Heart left ventricle (tissue), 16 donors: ENCODE measurements at regions of chr2 and their contacts with region 1.

Region 1: DNA sequence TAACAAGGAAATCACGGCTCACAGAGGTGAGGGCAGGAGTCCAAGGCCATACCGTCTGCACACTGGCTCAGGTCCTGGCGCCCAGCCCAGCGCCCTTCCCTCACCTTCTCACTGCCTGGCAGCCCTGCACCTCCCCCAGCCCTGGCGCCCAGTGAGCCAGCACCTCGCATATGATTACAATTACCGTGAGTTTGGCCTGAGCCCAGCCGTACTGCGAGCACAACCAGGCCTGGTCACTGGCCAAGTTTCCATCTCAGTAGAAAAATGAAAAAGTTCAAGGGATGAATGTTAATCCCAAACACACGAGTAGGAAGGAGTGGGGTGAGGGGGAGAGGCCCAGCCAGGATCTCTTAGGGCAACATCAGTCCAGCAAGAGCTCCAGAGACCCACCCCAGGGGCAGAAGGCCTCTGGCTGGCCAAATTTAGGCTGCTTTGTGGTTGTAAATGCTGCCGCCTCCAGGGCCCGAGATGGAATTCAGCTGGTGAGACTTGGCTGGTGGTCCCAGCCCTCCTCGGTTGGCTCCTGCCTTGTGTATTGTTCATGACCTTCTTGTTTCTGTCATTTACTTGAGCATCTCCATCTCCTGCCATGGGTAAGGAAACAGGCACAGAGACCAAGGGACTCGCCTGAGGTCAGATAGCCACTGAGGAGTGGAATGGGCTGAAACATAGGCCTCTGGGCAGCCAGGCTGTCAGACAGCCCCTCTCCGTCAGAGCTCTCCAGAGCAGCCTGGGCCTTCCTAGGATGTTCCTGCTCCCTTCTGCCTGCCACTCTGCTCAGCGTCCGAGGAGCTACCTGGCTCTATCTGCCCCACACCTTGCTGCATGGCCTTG is 68.2 kb downstream of the MCFD2 start:
- DNase-seq: peak; percentile 93 to 98 (median 95)
- ATAC-seq: peak; percentile 79 to 91 (median 90)
- H3K4me3 ChIP-seq: no peak overlapping the region
- H3K27ac ChIP-seq: peak overlapping the region; percentile 80 to 98 (median 92)
- H3K4me1 ChIP-seq: peaks cover 32 to 63% (median 58%) of the 10 kb centered on the region in 12 donors
- H3K27me3 ChIP-seq: no peaks in the 10 kb centered on the region
- CTCF ChIP-seq: peak in 3 of 12 donors; percentile 17 to 26 (median 18)
- POLR2A ChIP-seq: no peak

Region 2: DNA sequence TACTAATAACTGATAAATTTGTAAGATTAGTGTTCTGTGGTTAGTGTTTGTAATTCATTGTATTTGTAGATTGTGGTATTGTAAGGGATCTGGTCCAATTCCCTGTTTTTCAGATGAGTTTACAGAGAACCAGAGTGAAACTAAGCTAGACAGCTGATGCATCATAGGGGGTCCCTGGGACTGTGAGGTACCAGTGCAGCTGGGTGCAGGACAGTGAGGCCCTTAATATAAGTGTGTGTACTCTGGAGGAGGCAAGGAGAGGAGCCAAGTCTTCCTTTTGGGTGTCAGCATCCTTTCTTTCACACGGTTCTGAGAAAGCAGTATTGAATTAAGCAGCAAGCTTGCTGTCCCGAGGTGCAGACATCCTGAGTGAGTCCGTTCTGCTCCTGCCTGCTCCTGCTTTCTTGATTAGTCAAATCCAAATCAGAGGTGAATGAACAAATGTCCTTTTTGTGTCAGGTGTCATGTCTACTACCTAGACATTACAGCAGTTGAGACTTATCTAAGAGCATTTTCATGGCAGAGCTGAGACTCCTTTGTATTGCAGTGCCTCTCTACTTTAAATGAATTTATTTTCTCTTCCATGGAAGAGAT is 126.8 kb before region 1 on chr2:
- intact Hi-C with region 1: no loop called
- DNase-seq: no peak
- ATAC-seq: peak; percentile 28 to 57 (median 40)
- H3K4me3 ChIP-seq: no peak overlapping the region
- H3K27ac ChIP-seq: peak overlapping the region in 1 of 12 donors; percentile 29
- H3K4me1 ChIP-seq: peaks cover 3 to 87% (median 57%) of the 10 kb centered on the region in 12 donors
- H3K27me3 ChIP-seq: no peaks in the 10 kb centered on the region
- CTCF ChIP-seq: no peak
- POLR2A ChIP-seq: no peak

Region 3: DNA sequence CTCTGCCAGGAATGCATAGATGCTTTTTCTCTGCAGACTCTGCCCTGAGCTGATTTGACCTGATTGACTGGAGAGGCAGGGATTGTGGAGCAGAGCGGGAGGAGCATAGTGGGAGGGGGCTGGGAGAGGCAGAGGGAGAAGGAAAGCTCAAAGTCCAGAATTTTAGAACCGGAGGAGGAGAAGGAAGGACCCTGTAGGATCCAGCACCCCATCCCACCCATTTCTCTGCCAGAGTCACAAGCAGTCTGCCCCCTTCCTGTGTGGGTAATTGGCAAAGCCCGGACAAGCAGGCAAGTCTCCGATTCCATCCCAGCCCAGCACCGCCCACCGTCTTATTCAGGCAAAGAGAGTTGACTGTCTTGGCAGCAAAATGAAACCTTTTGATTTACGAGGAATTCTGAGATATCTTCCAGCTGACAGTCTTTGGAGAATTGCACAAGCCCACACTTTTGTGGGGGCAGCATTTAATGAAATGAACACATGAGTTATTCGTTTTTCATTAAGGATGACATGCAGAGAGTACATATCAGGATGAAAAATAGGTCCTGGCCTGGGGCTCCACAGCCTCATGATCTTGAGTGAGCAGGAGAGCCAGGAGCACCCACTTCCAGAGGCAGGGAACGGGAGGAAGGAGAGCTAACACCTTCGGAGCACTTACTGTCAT is 35.0 kb before region 1 on chr2:
- intact Hi-C with region 1: loop called in 6 of 10 experiments (anchors 1 to 5 kb)
- DNase-seq: peak; percentile 71 to 83 (median 80)
- ATAC-seq: peak; percentile 19 to 44 (median 35)
- H3K4me3 ChIP-seq: peak overlapping the region in 3 of 12 donors; percentile 13 to 20 (median 14)
- H3K27ac ChIP-seq: peak overlapping the region in 11 of 12 donors; percentile 81 to 96 (median 88)
- H3K4me1 ChIP-seq: peaks cover 16 to 65% (median 47%) of the 10 kb centered on the region in 12 donors
- H3K27me3 ChIP-seq: no peaks in the 10 kb centered on the region
- CTCF ChIP-seq: no peak
- POLR2A ChIP-seq: no peak

Region 4: GRCh38 chr2:46818121-46818888 is 29.1 kb before region 1 on chr2:
- intact Hi-C with region 1: loop called in 8 of 10 experiments (anchors 1 to 5 kb)
- DNase-seq: peak; percentile 82 to 97 (median 89)
- ATAC-seq: peak; percentile 89 to 96 (median 94)
- H3K4me3 ChIP-seq: no peak overlapping the region
- H3K27ac ChIP-seq: peak overlapping the region; percentile 77 to 95 (median 88)
- H3K4me1 ChIP-seq: peaks cover 20 to 74% (median 53%) of the 10 kb centered on the region in 12 donors
- H3K27me3 ChIP-seq: no peaks in the 10 kb centered on the region
- CTCF ChIP-seq: no peak
- POLR2A ChIP-seq: no peak

Region 5: DNA sequence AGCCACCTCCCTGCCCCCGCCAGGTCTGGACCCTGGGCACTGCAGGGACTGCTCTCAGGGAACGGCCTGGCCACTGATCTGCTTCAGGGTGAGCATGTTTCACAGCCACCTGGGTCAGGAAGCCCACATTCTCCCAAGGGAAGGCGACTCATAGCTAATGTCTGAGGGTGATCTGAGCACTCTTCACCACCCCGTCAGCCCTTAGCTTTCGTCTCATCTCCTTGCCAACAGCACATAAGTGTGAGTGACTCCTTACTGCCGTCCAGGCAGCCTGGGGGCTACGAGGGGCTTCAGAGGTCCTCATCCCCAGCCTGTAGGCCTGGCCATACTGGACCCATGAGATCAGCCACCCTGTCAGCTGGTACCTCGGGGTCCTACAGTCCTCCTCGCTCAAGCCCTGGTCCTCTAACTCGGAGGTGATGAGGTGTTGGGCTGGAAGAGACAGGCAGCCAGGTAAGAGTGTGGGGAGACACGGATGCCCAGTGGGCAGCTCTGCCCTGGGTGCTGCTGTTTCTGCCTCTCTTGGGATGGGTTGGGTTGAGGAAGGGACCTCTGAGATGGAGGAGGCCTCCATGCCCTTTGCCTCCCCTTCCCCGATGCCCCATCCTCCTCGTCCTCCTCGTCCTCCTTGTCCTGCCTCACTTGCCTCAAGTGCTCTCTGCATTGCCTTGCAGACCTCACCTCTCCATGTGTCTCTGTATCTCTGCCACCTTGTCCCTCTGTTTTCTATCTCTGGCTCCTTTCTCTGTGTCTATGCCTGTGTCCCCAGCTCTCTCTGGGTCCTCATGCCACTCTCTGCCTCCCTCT is 19.6 kb before region 1 on chr2:
- intact Hi-C with region 1: loop called in 3 of 10 experiments (anchors 2 kb)
- DNase-seq: no peak
- ATAC-seq: peak in 1 of 4 donors; percentile 9
- H3K4me3 ChIP-seq: no peak overlapping the region
- H3K27ac ChIP-seq: no peak overlapping the region
- H3K4me1 ChIP-seq: peaks cover 0 to 16% (median 0%) of the 10 kb centered on the region in 12 donors
- H3K27me3 ChIP-seq: no peaks in the 10 kb centered on the region
- CTCF ChIP-seq: no peak
- POLR2A ChIP-seq: no peak

Region 6: DNA sequence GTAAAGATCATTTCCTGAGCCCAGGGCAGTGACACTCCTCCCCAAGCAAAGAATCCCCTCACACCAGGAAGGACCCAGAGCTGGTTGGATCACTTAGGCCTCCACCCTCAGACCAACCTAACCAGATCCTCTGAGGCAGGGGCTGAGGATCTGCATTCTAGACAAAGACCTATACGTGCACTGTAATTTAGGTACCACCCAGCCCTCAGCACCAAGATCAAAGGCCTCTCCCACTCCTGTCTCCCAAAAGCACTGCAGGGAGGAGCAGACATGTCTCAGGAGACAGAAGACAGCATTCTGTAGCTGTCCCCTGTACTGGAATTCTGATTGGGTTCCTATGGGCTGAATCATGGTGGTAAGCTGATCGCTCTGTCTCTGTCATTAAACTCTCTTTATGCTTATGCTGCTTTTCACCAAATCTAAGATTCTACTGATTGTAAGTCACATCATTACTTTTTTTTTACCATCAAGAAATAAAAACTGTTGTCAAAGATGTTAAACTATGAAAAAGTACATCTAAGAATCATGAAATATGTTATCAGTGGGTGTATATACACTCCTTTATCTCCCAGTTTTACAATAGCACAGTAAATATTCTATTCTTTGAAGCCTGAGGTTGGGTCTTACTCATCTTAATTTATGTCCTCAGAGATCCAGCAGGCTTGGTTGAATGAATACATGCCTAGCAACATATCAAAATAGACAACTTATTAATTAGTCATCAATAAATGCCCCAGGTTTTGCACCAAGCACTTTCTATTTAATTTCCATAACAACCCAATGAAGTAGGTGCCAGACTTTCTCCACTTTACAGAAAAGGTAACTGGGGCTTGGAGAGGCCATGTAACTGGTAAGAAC is 39.8 kb after region 1 on chr2:
- intact Hi-C with region 1: no loop called
- DNase-seq: no peak
- ATAC-seq: no peak
- H3K4me3 ChIP-seq: no peak overlapping the region
- H3K27ac ChIP-seq: peak overlapping the region in 6 of 12 donors; percentile 27 to 61 (median 46)
- H3K4me1 ChIP-seq: peaks cover 3 to 22% (median 9%) of the 10 kb centered on the region in 12 donors
- H3K27me3 ChIP-seq: no peaks in the 10 kb centered on the region
- CTCF ChIP-seq: no peak
- POLR2A ChIP-seq: no peak